MCF 10A (cell line): ENCODE measurements at regions of chr2 and their contacts with region 1.

Region 1: DNA sequence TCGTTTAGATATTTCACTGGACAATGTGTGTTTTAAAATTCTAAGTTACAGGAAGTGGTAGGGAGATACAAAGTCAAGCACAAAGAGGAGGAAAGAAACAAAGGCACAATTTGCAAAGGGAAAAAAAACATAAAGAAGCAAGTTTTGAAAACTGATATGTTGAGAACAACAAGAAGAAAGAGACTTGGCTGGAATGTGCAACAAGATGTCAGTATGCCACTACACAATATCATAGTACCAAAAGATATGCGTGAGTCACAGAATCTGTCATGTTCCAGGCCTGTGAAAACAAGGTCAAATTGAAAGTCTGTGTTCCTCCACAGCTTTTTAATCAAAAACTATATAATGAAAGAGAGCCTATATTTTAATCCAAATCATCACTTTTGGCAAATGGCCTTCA is 12.0 kb downstream of the EXOC6B start:
- DNase-seq: no peak
- H3K4me3 Mint-ChIP-seq: no peak overlapping the region
- H3K27ac Mint-ChIP-seq: peak overlapping the region; percentile 8
- H3K4me1 Mint-ChIP-seq: peaks cover 20% of the 10 kb centered on the region
- H3K27me3 Mint-ChIP-seq: no peaks in the 10 kb centered on the region
- CTCF ChIP-seq: no peak

Region 2: GRCh38 chr2:72719416-72719815 is 94.4 kb before region 1 on chr2:
- CTCF ChIA-PET with region 1: no interaction called
- POLR2A ChIA-PET with region 1: no interaction called
- intact Hi-C with region 1: no loop called
- DNase-seq: peak; percentile 5
- H3K4me3 Mint-ChIP-seq: no peak overlapping the region
- H3K27ac Mint-ChIP-seq: no peak overlapping the region
- H3K4me1 Mint-ChIP-seq: no peaks in the 10 kb centered on the region
- H3K27me3 Mint-ChIP-seq: no peaks in the 10 kb centered on the region
- CTCF ChIP-seq: no peak

Region 3: DNA sequence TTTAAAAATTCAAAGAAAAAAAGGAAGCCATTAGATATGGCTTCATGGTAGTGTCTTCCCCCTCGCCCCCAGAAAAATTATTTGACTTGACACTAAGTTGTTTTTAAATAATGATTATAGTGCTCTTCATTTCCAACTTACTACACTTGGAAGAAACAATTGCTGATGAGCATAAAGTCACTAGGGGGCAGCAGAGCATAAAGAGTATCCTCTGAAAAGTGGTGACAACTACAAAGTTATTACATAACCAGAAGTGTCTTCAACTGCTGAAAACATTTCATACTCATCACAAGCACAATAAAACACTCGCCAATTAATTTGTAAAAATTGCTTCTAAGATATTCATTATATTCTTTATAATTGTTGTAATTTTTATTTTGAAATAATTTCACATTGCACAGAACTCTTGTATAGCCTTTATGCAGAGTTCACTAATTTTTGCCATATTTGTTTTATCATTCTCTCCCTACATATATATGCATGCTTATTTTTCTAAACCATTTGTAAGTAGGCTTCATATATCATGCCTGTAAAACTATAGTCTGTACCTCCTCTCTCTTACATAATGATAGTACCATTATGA is 42.9 kb before region 1 on chr2:
- CTCF ChIA-PET with region 1: interaction called, 10 read pairs
- POLR2A ChIA-PET with region 1: interaction called, 3 read pairs
- intact Hi-C with region 1: no loop called
- DNase-seq: peak; percentile 83
- H3K4me3 Mint-ChIP-seq: no peak overlapping the region
- H3K27ac Mint-ChIP-seq: no peak overlapping the region
- H3K4me1 Mint-ChIP-seq: no peaks in the 10 kb centered on the region
- H3K27me3 Mint-ChIP-seq: no peaks in the 10 kb centered on the region
- CTCF ChIP-seq: peak; percentile 73

Region 4: GRCh38 chr2:72780477-72780876 is 33.4 kb before region 1 on chr2:
- CTCF ChIA-PET with region 1: interaction called, 10 read pairs
- POLR2A ChIA-PET with region 1: no interaction called
- intact Hi-C with region 1: no loop called
- DNase-seq: peak; percentile 80
- H3K4me3 Mint-ChIP-seq: no peak overlapping the region
- H3K27ac Mint-ChIP-seq: no peak overlapping the region
- H3K4me1 Mint-ChIP-seq: peaks cover 21% of the 10 kb centered on the region
- H3K27me3 Mint-ChIP-seq: no peaks in the 10 kb centered on the region
- CTCF ChIP-seq: no peak

Region 5: DNA sequence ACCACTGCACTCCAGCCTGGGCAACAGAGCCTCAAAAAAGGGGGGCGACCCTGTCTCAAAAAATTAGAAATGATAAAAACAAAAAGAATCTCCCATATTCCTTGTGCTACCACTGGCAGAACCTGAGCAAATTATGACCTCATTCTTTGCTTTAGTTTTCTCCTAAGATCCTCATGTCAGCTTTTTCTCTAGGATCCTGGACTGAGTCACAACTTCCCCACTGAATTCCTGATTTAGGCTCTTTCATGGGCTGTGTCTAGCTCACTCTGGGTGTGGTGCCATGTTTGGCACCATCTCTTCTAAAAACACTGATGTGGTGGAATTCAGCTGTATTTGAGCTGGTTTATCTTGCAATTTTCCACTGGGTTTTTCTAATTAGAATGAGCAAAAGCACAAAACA is 25.1 kb before region 1 on chr2:
- CTCF ChIA-PET with region 1: interaction called, 12 read pairs
- POLR2A ChIA-PET with region 1: interaction called, 5 read pairs
- intact Hi-C with region 1: no loop called
- DNase-seq: peak; percentile 26
- H3K4me3 Mint-ChIP-seq: no peak overlapping the region
- H3K27ac Mint-ChIP-seq: peak overlapping the region; percentile 5
- H3K4me1 Mint-ChIP-seq: peaks cover 12% of the 10 kb centered on the region
- H3K27me3 Mint-ChIP-seq: no peaks in the 10 kb centered on the region
- CTCF ChIP-seq: no peak